Heart left ventricle (tissue), 16 donors: ENCODE measurements at regions of chr16 and their contacts with region 1.

Region 1: DNA sequence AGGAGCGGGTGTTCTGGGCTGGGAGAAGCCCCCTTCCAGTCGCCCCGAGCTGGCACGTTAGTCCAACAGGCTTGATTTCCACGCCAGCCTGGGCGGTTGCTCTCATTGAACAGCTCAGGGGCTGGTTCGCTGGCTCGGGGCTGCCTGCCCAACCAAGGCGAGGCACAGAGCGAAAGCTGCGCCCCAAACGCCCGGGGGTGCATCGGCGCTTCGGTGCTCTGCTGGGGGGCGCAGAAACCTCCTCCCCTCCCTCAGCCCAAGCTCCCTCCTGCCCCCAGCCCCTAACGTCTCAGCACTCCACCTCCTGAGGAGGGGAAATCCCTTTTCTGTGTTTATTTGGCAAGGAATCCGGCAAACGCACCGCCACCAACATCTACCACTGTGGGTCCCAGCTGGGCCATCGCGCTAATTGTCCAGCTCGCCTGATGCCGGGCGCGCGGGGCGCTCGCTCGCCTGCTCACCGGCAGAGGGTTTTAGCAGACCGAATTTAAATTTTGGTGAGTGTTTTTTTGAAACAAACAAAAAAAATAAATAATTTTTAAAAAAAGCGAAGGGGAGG is 29.5 kb upstream of the RBFOX1 start:
- DNase-seq: peak in 2 of 5 donors; percentile 35 to 66
- ATAC-seq: peak in 3 of 4 donors; percentile 20 to 76 (median 68)
- H3K4me3 ChIP-seq: peak overlapping the region in 11 of 12 donors; percentile 1 to 56 (median 44)
- H3K27ac ChIP-seq: no peak overlapping the region
- H3K4me1 ChIP-seq: peaks cover 0 to 16% (median 0%) of the 10 kb centered on the region in 12 donors
- H3K27me3 ChIP-seq: peaks cover 0 to 28% (median 3%) of the 10 kb centered on the region in 9 donors
- CTCF ChIP-seq: peak in 4 of 12 donors; percentile 6 to 26 (median 14)
- POLR2A ChIP-seq: no peak

Region 2: GRCh38 chr16:7101054-7101453 is 202.1 kb before region 1 on chr16:
- intact Hi-C with region 1: no loop called
- DNase-seq: no peak
- ATAC-seq: no peak
- H3K4me3 ChIP-seq: no peak overlapping the region
- H3K27ac ChIP-seq: no peak overlapping the region
- H3K4me1 ChIP-seq: no peaks in the 10 kb centered on the region
- H3K27me3 ChIP-seq: peaks cover 0 to 2% (median 0%) of the 10 kb centered on the region in 9 donors
- CTCF ChIP-seq: no peak
- POLR2A ChIP-seq: no peak

Region 3: DNA sequence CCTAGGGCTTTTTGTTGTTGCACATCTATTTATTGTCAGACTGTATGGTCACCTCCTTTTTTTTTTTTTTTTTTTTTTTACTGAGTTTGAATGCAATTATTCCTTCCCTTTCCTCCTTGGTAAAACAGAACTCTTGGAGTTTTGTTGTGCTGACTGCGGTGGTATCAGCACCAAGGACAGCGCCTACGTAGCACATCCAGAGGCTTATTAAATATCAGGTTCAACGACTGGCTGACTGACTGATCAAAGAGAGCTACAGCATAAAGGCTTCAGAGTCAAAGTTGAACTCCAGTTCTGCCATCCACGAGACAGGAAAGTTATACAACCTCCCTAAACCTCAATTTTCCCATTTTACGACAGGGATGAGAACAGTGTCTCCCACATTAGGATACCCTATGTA is 56.6 kb before region 1 on chr16:
- intact Hi-C with region 1: loop called in 1 of 10 experiments (anchors 10 kb)
- DNase-seq: peak in 1 of 5 donors; percentile 35
- ATAC-seq: no peak
- H3K4me3 ChIP-seq: no peak overlapping the region
- H3K27ac ChIP-seq: no peak overlapping the region
- H3K4me1 ChIP-seq: no peaks in the 10 kb centered on the region
- H3K27me3 ChIP-seq: peaks cover 0 to 7% (median 0%) of the 10 kb centered on the region in 9 donors
- CTCF ChIP-seq: no peak
- POLR2A ChIP-seq: no peak